Heart right ventricle (tissue), 16 donors: ENCODE measurements at regions of chr14 and their contacts with region 1.

Region 1: GRCh38 chr14:73591690-73592448 is at the start of gene ACOT4:
- DNase-seq: peak in 1 of 2 donors; percentile 26
- ATAC-seq: peak; percentile 72 to 93 (median 86)
- H3K4me3 ChIP-seq: peak within 1 kb of the TSS; percentile 28 to 74 (median 68)
- H3K27ac ChIP-seq: peak within 1 kb of the TSS in 5 of 10 donors; percentile 7 to 45 (median 14)
- H3K4me1 ChIP-seq: peaks cover 0 to 9% (median 3%) of the 10 kb centered on the region in 9 donors
- H3K27me3 ChIP-seq: no peaks in the 10 kb centered on the region
- CTCF ChIP-seq: peak in 1 of 9 donors; percentile 15
- total RNA-seq, gene ACOT4: 0.13 to 1.9 (median 1.0) TPM

Region 2: GRCh38 chr14:72588521-72588920 is 1003.3 kb before region 1 on chr14:
- intact Hi-C with region 1: loop called in 1 of 10 experiments (anchors 5 kb)
- DNase-seq: no peak
- ATAC-seq: no peak
- H3K4me3 ChIP-seq: no peak overlapping the region
- H3K27ac ChIP-seq: no peak overlapping the region
- H3K4me1 ChIP-seq: no peaks in the 10 kb centered on the region
- H3K27me3 ChIP-seq: peaks cover 0 to 15% (median 0%) of the 10 kb centered on the region in 7 donors
- CTCF ChIP-seq: no peak

Region 3: DNA sequence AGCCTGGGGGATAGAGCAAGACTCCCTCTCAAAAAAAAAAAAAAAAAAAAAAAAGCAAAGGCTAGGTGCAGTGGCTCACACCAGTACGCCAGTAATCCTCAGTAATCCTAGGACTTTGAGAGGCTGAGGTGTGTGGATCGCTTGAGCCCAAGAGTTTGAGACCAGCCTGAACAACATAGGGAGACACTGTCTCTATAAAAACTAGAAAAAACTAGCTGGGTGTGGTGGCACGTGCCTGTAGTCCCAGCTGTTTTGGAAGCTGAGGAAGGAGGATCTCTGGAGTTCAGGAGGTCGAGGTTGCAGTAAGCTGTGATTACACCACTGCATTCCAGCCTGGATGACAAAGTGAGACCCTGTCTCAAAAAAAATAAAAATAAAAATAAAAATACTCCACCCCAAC is 542.4 kb before region 1 on chr14:
- intact Hi-C with region 1: no loop called
- DNase-seq: no peak
- ATAC-seq: no peak
- H3K4me3 ChIP-seq: no peak overlapping the region
- H3K27ac ChIP-seq: no peak overlapping the region
- H3K4me1 ChIP-seq: no peaks in the 10 kb centered on the region
- H3K27me3 ChIP-seq: no peaks in the 10 kb centered on the region
- CTCF ChIP-seq: no peak